Vagina (tissue), 2 donors: ENCODE measurements at regions of chr1 and their contacts with region 1.

Region 1: GRCh38 chr1:46179138-46180081 is 3.1 kb upstream of the P3R3URF start:
- DNase-seq: no peak
- H3K4me3 ChIP-seq: no peak overlapping the region
- H3K27ac ChIP-seq: peak overlapping the region; percentile 19
- H3K4me1 ChIP-seq: peaks cover 56% of the 10 kb centered on the region
- H3K27me3 ChIP-seq: no peaks in the 10 kb centered on the region
- CTCF ChIP-seq: peak; percentile 75 to 91 (median 90)
- POLR2A ChIP-seq: no peak

Region 2: GRCh38 chr1:44263568-44264450 is 1915.6 kb before region 1 on chr1:
- intact Hi-C with region 1: no loop called
- DNase-seq: no peak
- H3K4me3 ChIP-seq: no peak overlapping the region
- H3K27ac ChIP-seq: no peak overlapping the region
- H3K4me1 ChIP-seq: peaks cover 6% of the 10 kb centered on the region
- H3K27me3 ChIP-seq: no peaks in the 10 kb centered on the region
- CTCF ChIP-seq: no peak
- POLR2A ChIP-seq: no peak

Region 3: GRCh38 chr1:46036894-46037839 is 142.2 kb before region 1 on chr1:
- intact Hi-C with region 1: loop called (anchors 2 kb)
- DNase-seq: no peak
- H3K4me3 ChIP-seq: no peak overlapping the region
- H3K27ac ChIP-seq: no peak overlapping the region
- H3K4me1 ChIP-seq: peaks cover 9% of the 10 kb centered on the region
- H3K27me3 ChIP-seq: no peaks in the 10 kb centered on the region
- CTCF ChIP-seq: peak; percentile 96 to 98 (median 96)
- POLR2A ChIP-seq: no peak

Region 4: DNA sequence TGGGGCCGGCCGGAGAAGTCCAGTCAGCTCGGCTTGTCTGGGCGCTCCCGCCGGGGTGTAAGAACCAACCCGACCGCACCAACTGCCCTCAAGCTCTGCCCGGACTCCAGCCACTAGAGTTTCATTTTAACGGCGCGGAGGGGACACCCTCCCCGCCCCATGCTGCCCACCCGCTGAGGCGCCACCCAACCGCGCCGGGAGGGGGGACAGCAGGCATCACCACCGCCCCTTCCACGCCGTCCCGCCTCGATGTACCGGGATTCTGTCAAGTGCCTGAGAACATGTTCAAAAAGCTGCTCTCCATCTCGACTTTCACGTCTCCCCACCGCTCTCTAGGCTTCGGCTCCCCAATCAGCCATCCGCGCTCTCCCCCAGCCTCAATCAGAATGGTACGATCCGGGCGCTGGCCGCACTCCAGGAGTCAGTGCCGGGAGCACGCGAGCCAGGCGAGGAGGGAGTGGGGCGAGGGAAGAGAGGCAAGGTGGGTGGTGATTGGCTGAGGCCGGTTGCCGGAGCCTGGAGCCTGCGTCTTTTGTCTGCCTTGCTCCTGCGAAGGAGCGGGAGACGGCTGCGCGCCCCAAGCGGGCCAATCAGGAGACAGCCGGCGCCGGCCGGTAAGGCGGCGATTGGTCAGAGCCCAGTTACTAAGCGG is 46.8 kb before region 1 on chr1 and contains the start of gene PIK3R3:
- intact Hi-C with region 1: loop called (anchors 2 kb)
- DNase-seq: peak; percentile 97 to 98
- H3K4me3 ChIP-seq: peak within 1 kb of the TSS; percentile 61 to 71
- H3K27ac ChIP-seq: peak within 1 kb of the TSS; percentile 92
- H3K4me1 ChIP-seq: peaks cover 25% of the 10 kb centered on the region
- H3K27me3 ChIP-seq: no peaks in the 10 kb centered on the region
- CTCF ChIP-seq: no peak
- POLR2A ChIP-seq: peak in 1 of 2 donors; percentile 70
- total RNA-seq, gene PIK3R3: 27.0 TPM